Activated T-helper 1 cell treated with anti-CD3 and anti-CD28 coated beads, Interleukin-12 subunit alpha, Interleukin-12 subunit beta, Interleukin-2, Interleukin-4 antibody, amounts not matched to agents 30 ng/mL and 10 ng/mL and 1 ng/mL, durations not matched to agents 14 hours and 24 hours and 36 hours (primary cell): ENCODE measurements at regions of chr18 and their contacts with region 1.

Region 1: DNA sequence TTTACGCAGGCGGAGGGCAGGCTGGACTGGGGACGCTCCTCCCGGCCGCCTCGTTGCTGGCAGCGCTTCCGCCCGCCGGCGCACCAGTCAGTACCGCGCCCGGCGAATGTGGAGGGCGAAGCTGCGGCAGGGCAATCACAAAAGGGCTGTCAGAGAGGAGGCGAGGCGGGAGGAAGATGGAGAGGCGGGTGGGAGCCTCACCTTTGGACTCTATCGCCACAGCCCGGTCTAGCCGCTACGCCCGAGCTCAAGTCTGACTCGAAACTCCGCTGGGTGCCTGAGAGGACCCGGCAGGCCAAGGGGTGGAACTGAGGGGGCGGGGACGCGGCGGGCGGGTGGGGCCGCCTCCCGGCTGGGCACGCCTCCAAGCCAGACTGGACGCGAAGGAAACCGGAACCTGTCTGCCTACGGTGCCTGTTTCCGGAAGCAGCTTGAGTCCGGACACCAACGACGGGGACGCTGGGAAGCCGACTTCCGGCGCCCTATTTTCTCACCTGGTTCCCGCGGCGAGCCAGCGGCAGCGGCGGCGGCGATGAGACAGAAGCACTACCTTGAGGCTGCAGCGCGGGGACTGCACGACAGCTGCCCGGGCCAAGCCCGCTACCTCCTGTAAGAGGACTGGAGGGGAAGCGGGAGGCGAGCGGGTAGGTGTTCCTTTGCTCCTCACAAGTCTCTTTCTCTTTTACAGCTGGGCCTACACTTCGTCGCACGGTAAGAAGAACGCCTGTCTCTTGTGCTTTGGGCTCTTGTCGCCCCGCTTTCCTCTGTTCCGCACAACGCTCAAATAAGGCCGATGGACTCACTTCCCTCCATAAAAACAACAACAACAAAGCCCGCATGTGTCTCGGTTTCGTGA is at the start of gene RMP24:
- DNase-seq: peak; percentile 90
- H3K4me3 Mint-ChIP-seq: peak within 1 kb of the TSS; percentile 98
- H3K27ac Mint-ChIP-seq: peak within 1 kb of the TSS; percentile 98
- H3K4me1 Mint-ChIP-seq: peaks cover 53% of the 10 kb centered on the region
- H3K27me3 Mint-ChIP-seq: no peaks in the 10 kb centered on the region

Region 2: DNA sequence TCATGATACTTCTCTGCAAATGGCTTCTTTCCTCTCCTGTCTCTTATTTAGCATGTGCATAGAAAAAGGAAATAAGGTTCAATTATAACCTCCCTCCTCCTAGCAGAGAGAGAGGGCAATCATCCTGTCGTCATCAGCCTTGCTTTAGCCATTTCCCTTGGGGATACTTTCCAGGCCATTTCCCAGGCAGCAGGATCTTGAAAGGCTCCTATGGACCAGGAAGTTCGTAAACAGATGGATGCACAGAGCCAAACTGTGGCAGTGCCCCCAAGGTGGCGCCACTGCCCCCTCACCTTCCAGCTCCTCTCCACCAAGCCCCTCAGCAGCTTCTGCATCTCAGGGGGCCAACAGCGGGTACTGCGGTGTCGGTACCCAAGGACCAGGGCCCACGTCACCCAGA is 1104.9 kb before region 1 on chr18:
- intact Hi-C with region 1: loop called (anchors 10 kb)
- DNase-seq: no peak
- H3K4me3 Mint-ChIP-seq: no peak overlapping the region
- H3K27ac Mint-ChIP-seq: no peak overlapping the region
- H3K4me1 Mint-ChIP-seq: peaks cover 33% of the 10 kb centered on the region
- H3K27me3 Mint-ChIP-seq: peaks cover 20% of the 10 kb centered on the region

Region 3: GRCh38 chr18:35580701-35581539 is 391.5 kb before region 1 on chr18:
- intact Hi-C with region 1: loop called (anchors 2 kb)
- DNase-seq: peak; percentile 44
- H3K4me3 Mint-ChIP-seq: peak overlapping the region; percentile 76
- H3K27ac Mint-ChIP-seq: no peak overlapping the region
- H3K4me1 Mint-ChIP-seq: peaks cover 33% of the 10 kb centered on the region
- H3K27me3 Mint-ChIP-seq: peaks cover 3% of the 10 kb centered on the region